ENCODE measurements at regions of chr1 and their contacts with region 1.

Region 1: GRCh38 chr1:19885821-19886220 is 3.6 kb downstream of the OTUD3 start:
- DNase-seq: no peak
- ATAC-seq: no peak

Region 2: DNA sequence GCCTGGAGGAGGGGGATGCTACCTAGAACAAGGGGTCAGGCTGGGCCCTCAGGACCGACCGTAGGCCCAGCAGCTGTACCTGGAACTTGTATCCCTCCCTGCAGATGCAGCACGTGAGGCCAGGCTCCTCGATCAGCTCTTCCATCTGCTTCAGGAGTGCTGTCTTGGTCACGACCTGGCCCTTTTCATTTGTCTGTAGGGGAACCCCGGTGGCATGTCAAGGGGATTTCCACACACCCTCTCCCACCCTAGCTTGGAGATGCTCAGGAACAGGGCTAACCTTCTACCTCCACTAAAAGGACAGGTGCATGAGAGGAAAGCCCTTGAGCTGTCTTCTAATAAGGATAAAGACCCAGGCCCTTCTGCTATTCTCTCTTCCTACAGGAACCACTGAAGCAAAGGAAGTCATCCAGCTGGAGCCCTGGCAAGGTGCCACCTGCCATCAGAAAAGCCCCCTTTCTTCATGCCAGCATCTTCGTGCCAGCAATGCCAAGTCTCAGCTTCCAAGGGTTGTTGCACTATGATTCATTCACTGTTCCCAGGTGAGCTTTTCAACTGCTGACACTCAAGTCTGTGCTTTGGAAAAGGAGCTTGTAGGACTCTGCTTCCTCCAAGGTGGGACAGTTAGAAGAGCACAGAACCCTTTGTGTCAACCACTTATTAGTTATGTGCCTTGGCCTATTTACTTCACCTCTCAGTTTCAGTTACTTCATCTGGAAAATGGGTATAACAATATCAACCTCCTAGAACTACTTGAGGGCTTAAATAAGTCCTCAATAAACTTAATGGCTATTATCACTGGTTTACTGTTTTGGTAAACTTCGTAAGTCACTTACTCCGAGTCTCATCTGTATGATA is 797.9 kb before region 1 on chr1:
- intact Hi-C with region 1: loop called (anchors 5 kb)
- DNase-seq: no peak
- ATAC-seq: no peak

Measured in sciatic nerve (tissue), 2 donors.